OCI-LY7 (cell line): ENCODE measurements at regions of chr4 and their contacts with region 1.

Region 1: DNA sequence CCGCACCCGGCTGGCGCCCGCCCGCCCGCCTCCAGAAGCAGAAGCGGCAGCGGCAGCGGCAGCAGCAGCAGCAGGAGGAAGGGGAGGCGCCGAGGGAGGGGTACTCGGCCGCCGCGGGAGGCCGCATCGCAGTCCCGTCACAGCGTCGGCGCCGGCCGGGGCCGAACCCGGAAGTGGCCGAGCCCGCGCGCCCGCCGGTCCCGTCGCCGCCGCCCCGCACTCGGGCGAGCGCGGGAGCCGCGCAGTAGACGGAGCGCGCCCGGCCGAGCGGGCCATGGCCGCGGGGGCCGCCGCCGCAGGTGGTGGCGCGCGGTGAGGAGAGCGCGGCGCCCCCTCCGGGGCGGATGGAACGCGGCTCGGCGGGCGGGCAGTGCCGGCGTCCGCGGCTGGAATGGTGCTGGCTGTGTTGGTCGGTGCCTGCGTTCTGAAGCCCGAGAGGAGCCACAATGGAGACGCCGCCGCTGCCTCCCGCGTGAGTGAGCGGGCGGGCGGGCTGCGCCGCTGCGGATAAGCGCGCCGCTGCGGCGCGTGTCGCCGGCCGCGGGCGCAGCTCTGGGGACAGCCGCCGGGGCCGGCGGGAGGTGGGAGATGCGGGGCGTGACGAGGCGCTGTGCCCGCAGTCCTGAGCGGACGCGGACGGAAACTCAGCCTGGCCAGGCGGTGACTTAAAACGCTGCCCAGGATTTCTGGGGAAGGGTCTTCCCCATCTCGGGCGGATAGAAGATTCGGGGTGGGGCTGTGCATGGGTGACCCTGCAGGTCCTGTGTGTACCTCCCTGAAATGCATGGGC is at the start of gene KLHL2:
- DNase-seq: peak; percentile 86
- H3K4me3 ChIP-seq: peak within 1 kb of the TSS; percentile 100
- H3K27ac ChIP-seq: peak within 1 kb of the TSS; percentile 23
- H3K4me1 ChIP-seq: peaks cover 41% of the 10 kb centered on the region
- CTCF ChIP-seq: 0 out of 2 replicates have a peak, but pooled peaks have one; percentile 19
- total RNA-seq, gene KLHL2: 21.9 and 27.9 TPM in 2 replicates

Region 2: DNA sequence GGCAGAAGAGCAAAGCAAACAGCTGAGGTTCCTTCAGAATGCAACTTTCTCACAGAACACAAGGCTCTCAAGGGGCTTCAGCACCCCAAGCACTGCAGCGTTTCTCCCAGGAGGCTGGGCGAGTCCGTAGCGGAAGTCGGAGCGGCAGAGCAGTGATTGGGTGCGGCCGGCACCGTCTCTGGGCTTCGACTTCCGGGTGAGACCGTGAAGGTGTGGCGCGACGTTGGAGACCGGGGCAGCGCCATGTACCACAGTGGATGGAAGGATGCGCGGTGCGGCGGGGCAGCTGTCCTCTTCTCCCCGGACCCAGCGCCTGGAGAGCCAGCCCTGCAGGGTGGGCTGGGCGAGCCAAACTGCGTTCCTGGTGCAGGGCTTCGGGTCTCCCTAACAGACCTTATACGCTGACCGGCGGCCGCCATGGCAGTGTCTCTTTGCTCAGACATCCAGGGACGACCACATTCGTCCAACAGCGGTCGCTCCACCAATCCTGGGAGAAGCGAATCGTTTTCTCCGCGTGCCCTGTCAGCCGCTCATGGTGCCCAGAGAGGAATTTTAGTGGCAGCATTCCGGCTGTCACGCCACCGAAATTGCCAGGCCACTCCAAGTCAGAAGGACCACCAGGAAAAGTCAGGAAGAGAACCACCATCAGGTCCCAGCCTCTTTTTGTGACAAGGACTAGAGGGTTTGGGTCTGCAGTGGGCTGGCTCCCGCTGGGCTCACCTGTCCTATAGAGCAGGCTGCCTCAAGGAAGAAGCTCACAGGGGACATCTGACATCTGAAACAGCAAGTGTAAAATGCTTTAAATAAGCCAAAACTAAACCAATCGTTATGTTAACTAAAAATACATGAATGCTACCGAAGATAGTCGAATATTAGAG is 250.6 kb before region 1 on chr4:
- CTCF ChIA-PET with region 1: no interaction called
- POLR2A ChIA-PET with region 1: no interaction called
- intact Hi-C with region 1: loop called (anchors 10 kb)
- DNase-seq: peak; percentile 93
- H3K4me3 ChIP-seq: peak overlapping the region; percentile 86
- H3K27ac ChIP-seq: peak overlapping the region; percentile 56
- H3K4me1 ChIP-seq: peaks cover 35% of the 10 kb centered on the region
- CTCF ChIP-seq: peak; percentile 24; the same call in 1 of the 2 replicates